Uterus (tissue), 4 donors: ENCODE measurements at regions of chr1 and their contacts with region 1.

Region 1: GRCh38 chr1:45011837-45012638 is at the start of gene UROD:
- DNase-seq: peak; percentile 92 to 93
- H3K4me3 ChIP-seq: peak within 1 kb of the TSS; percentile 48 to 88
- H3K27ac ChIP-seq: peak within 1 kb of the TSS; percentile 76 to 83
- H3K4me1 ChIP-seq: peaks cover 0 to 11% of the 10 kb centered on the region in 2 donors
- H3K27me3 ChIP-seq: no peaks in the 10 kb centered on the region
- CTCF ChIP-seq: peak in 1 of 4 experiments; percentile 31
- POLR2A ChIP-seq: peak in 1 of 2 donors; percentile 22
- total RNA-seq, gene UROD: 76.4 to 104 (median 88.9) TPM

Region 2: GRCh38 chr1:44786138-44786840 is 225.7 kb before region 1 on chr1:
- intact Hi-C with region 1: loop called (anchors 5 kb)
- DNase-seq: peak; percentile 64 to 78
- H3K4me3 ChIP-seq: peak overlapping the region; percentile 36 to 45
- H3K27ac ChIP-seq: peak overlapping the region; percentile 68 to 77
- H3K4me1 ChIP-seq: peaks cover 0 to 7% of the 10 kb centered on the region in 2 donors
- H3K27me3 ChIP-seq: no peaks in the 10 kb centered on the region
- CTCF ChIP-seq: peak; percentile 95 to 98 (median 97)
- POLR2A ChIP-seq: peak in 1 of 2 donors; percentile 33

Region 3: GRCh38 chr1:45303582-45304310 is 291.7 kb after region 1 on chr1:
- intact Hi-C with region 1: loop called (anchors 5 kb)
- DNase-seq: peak; percentile 99
- H3K4me3 ChIP-seq: peak overlapping the region; percentile 59 to 65
- H3K27ac ChIP-seq: peak overlapping the region; percentile 76 to 93
- H3K4me1 ChIP-seq: peaks cover 0 to 6% of the 10 kb centered on the region in 2 donors
- H3K27me3 ChIP-seq: no peaks in the 10 kb centered on the region
- CTCF ChIP-seq: peak; percentile 66 to 86 (median 78)
- POLR2A ChIP-seq: peak; percentile 32 to 68